HCT116 (cell line): ENCODE measurements at regions of chr21 and their contacts with region 1.

Region 1: GRCh38 chr21:37166733-37167132 is 93.7 kb downstream of the TTC3 start:
- DNase-seq: peak; percentile 23
- ATAC-seq: peak; percentile 68
- H3K4me3 ChIP-seq: no peak overlapping the region
- H3K27ac ChIP-seq: no peak overlapping the region
- H3K4me1 ChIP-seq: no peaks in the 10 kb centered on the region
- H3K27me3 ChIP-seq: no peaks in the 10 kb centered on the region
- CTCF ChIP-seq: peak; percentile 11 to 42 (median 38); a peak in 2 of 6 replicates
- POLR2A ChIP-seq: no peak
- RAD21 ChIP-seq: peak; percentile 71

Region 2: DNA sequence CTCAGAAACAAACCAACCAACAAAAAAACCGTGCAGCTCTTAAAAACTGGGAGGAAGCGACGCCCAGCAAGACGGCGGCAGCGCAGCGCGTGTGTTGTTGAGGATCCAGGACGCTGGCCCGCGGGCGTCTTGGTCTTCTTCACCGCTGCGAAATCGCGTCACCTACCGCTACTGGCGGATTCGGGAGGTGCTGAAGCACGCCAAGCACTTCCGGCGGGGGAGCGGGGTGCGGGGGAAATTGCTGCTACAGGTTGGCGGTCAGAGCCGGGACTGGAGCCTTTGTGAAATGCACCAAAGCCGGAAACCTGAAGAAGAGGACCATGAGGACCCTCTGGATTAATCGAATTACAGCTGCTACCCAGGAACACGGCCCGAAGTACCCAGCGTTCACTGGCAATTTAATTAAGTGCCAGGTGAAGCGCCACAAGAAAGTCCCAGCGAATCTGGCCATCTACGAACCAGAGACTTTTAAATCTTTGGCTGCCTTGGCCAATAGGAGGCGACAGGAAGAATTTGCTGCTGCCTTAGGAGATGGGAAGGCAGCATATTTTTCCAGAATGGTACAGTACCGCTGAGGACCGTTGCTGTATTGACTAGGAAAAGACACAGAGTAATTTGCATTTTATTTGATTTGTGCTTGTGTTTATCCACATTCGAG is 172.1 kb before region 1 on chr21:
- CTCF ChIA-PET with region 1: no interaction called
- POLR2A ChIA-PET with region 1: no interaction called
- RAD21 ChIA-PET with region 1: no interaction called
- intact Hi-C with region 1: no loop called
- DNase-seq: no peak
- ATAC-seq: no peak
- H3K4me3 ChIP-seq: no peak overlapping the region
- H3K27ac ChIP-seq: no peak overlapping the region
- H3K4me1 ChIP-seq: peaks cover 8 to 11% of the 10 kb centered on the region in 2 experiments
- H3K27me3 ChIP-seq: no peaks in the 10 kb centered on the region
- CTCF ChIP-seq: no peak; a peak in 1 of 6 replicates
- POLR2A ChIP-seq: no peak
- RAD21 ChIP-seq: no peak

Region 3: GRCh38 chr21:37429356-37429755 is 262.6 kb after region 1 on chr21:
- CTCF ChIA-PET with region 1: no interaction called
- POLR2A ChIA-PET with region 1: no interaction called
- RAD21 ChIA-PET with region 1: no interaction called
- intact Hi-C with region 1: loop called (anchors 10 kb)
- DNase-seq: no peak
- ATAC-seq: no peak
- H3K4me3 ChIP-seq: no peak overlapping the region
- H3K27ac ChIP-seq: no peak overlapping the region
- H3K4me1 ChIP-seq: no peaks in the 10 kb centered on the region
- H3K27me3 ChIP-seq: no peaks in the 10 kb centered on the region
- CTCF ChIP-seq: no peak
- POLR2A ChIP-seq: no peak
- RAD21 ChIP-seq: no peak

Region 4: DNA sequence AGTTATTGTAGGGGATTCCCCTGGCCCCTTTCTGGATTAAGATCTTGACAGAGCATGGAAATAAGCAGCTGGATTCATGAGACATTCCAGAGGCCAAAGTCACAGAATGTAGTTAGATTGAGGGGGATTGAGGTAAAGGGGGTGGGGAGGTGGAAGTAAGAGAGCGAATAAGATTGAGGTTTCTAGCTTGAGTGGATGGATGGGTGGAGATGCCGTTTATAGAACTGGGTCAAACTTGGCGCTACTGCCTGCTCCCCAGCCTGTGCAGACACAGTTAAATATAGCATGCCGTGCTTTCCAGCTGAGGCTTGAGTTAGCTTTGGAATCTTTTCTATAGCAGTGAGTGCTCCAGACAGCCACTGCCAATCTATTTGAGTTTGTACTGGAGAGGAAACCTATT is 285.5 kb after region 1 on chr21:
- CTCF ChIA-PET with region 1: no interaction called
- POLR2A ChIA-PET with region 1: no interaction called
- RAD21 ChIA-PET with region 1: no interaction called
- intact Hi-C with region 1: loop called (anchors 10 kb)
- DNase-seq: no peak
- ATAC-seq: peak; percentile 19; the same call in 1 of the 2 replicates
- H3K4me3 ChIP-seq: no peak overlapping the region
- H3K27ac ChIP-seq: no peak overlapping the region
- H3K4me1 ChIP-seq: peaks cover 18 to 51% of the 10 kb centered on the region in 2 experiments
- H3K27me3 ChIP-seq: no peaks in the 10 kb centered on the region
- CTCF ChIP-seq: no peak
- POLR2A ChIP-seq: no peak
- RAD21 ChIP-seq: no peak

Region 5: GRCh38 chr21:37582590-37582989 is 415.9 kb after region 1 on chr21:
- CTCF ChIA-PET with region 1: no interaction called
- POLR2A ChIA-PET with region 1: no interaction called
- RAD21 ChIA-PET with region 1: no interaction called
- intact Hi-C with region 1: loop called (anchors 10 kb)
- DNase-seq: peak; percentile 18
- ATAC-seq: peak; percentile 83
- H3K4me3 ChIP-seq: no peak overlapping the region
- H3K27ac ChIP-seq: no peak overlapping the region
- H3K4me1 ChIP-seq: no peaks in the 10 kb centered on the region
- H3K27me3 ChIP-seq: no peaks in the 10 kb centered on the region
- CTCF ChIP-seq: peak; percentile 33 to 55 (median 47); a peak in 5 of 6 replicates
- POLR2A ChIP-seq: no peak
- RAD21 ChIP-seq: peak; percentile 63

Region 6: GRCh38 chr21:37642493-37642892 is 475.8 kb after region 1 on chr21:
- CTCF ChIA-PET with region 1: no interaction called
- POLR2A ChIA-PET with region 1: no interaction called
- RAD21 ChIA-PET with region 1: no interaction called
- intact Hi-C with region 1: loop called (anchors 2 kb)
- DNase-seq: peak; percentile 24
- ATAC-seq: peak; percentile 89
- H3K4me3 ChIP-seq: no peak overlapping the region
- H3K27ac ChIP-seq: no peak overlapping the region
- H3K4me1 ChIP-seq: no peaks in the 10 kb centered on the region
- H3K27me3 ChIP-seq: no peaks in the 10 kb centered on the region
- CTCF ChIP-seq: peak; percentile 49 to 58 (median 54); a peak in 5 of 6 replicates
- POLR2A ChIP-seq: no peak
- RAD21 ChIP-seq: peak; percentile 69